ENCODE measurements at regions of chr5 and their contacts with region 1.

Region 1: DNA sequence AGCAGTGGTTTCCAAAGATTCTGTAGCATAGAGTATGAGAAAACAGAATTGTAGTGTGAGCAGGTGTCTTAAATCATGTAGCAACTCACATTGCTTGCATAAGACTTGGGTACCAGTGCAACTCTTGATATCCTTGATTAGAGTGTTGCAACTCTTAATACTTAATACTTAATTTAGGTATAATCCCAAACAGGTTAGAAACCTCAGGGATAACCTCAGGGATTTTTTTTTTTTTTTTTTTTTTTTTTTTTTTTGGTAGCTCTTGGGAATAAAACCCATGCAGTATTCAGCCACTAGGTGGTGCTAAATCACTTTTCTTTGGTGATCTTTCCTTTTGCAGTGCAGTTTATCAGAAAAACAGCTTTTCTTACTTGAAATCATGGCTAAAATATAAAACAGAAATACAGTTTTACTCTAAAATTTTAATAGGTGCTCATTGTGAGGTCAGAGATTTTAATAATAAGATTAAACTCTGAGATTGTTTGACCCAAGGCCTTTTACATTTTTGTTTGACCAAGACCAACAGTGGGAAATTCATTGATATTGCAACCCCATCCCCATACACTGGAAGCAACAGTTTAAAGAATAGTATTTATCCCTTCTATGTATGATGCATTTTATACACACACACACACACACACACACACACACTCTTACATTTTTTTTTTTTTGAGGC is 55.3 kb downstream of the ERAP1 start:
- DNase-seq: peak; percentile 38
- CTCF ChIP-seq: peak; percentile 48

Region 2: GRCh38 chr5:96714951-96715451 is 37.5 kb before region 1 on chr5:
- CTCF ChIA-PET with region 1: interaction called, 12 read pairs
- POLR2A ChIA-PET with region 1: no interaction called
- DNase-seq: no peak
- CTCF ChIP-seq: no peak

Region 3: DNA sequence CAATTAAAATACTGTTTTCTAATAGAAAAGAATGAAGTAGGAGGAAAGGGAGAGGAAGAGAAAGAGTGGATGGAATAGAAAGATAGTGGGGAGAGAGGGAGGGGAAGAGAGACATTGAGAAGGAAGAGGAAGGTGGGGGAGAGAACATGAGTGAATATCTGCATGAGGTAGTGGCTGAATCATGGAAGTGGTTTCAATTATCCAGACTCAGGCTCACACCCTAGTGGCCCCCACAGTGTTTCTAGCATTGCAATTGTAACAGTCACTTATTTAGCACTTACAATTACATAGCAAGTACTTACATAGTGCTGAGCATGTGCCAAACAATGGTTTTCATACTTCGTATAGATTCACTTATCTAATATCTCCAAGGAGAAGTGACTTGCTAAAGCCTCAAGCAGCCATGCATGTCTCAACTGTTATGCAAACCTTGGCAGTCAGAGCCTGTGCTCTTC is 17.6 kb before region 1 on chr5:
- CTCF ChIA-PET with region 1: interaction called, 16 read pairs
- POLR2A ChIA-PET with region 1: no interaction called
- DNase-seq: no peak
- CTCF ChIP-seq: no peak

Region 4: GRCh38 chr5:96771395-96771794 is 18.9 kb after region 1 on chr5:
- CTCF ChIA-PET with region 1: interaction called, 13 read pairs
- POLR2A ChIA-PET with region 1: no interaction called
- DNase-seq: no peak
- CTCF ChIP-seq: no peak

Region 5: GRCh38 chr5:97142521-97143254 is 390.2 kb after region 1 on chr5 and contains the start of gene LIX1:
- CTCF ChIA-PET with region 1: interaction called, 21 read pairs
- POLR2A ChIA-PET with region 1: no interaction called
- DNase-seq: peak; percentile 48
- CTCF ChIP-seq: peak; percentile 63

Measured in GM10248 (cell line).